ENCODE measurements at regions of chr11 and their contacts with region 1.

Region 1: GRCh38 chr11:17978553-17979287 is 34.1 kb downstream of the SERGEF start:
- DNase-seq: no peak
- H3K4me3 ChIP-seq: no peak overlapping the region
- H3K27me3 ChIP-seq: no peaks in the 10 kb centered on the region
- CTCF ChIP-seq: peak; percentile 92

Region 2: GRCh38 chr11:17730608-17731462 is 247.9 kb before region 1 on chr11:
- CTCF ChIA-PET with region 1: interaction called, 533 read pairs
- POLR2A ChIA-PET with region 1: no interaction called
- DNase-seq: no peak
- H3K4me3 ChIP-seq: no peak overlapping the region
- H3K27me3 ChIP-seq: peaks cover 17% of the 10 kb centered on the region
- CTCF ChIP-seq: peak; percentile 92

Region 3: DNA sequence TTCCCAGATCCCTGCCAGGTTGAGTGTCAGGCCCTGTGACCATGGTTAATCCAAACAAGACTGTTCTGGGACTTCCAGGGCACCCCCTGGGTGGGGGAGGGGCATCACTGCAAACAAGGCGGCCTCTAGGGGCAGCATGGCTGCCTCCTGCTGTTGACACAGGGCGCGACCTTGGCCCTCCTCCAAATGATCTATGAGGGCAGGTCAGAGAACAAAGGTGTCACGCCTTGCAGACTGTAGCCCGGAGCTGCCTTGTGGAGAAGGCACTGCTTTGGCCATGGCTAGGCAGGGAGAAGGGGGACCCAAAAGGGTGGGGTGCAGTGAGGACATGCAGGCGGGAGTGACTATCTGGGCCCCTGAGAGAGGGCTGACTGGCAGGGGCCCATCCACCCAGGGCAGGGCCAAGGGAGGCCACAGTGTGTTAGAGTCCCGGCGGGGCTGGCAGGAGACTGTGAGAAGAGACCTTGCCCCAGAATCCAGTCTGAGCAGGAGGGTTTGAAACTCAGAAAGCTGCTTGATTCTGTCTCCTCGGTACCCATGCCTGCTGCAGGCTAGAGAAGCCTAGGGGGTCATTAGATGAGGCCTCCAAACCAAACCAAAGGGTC is 208.6 kb before region 1 on chr11:
- CTCF ChIA-PET with region 1: interaction called, 65 read pairs
- POLR2A ChIA-PET with region 1: no interaction called
- DNase-seq: no peak
- H3K4me3 ChIP-seq: no peak overlapping the region
- H3K27me3 ChIP-seq: no peaks in the 10 kb centered on the region; the same call in 1 of the 2 replicates
- CTCF ChIP-seq: peak; percentile 9; the same call in 1 of the 2 replicates

Region 4: GRCh38 chr11:17967661-17968060 is 11.1 kb before region 1 on chr11:
- CTCF ChIA-PET with region 1: interaction called, 21 read pairs
- POLR2A ChIA-PET with region 1: no interaction called
- DNase-seq: no peak
- H3K4me3 ChIP-seq: no peak overlapping the region
- H3K27me3 ChIP-seq: no peaks in the 10 kb centered on the region
- CTCF ChIP-seq: no peak